Transverse colon (tissue), 4 donors: ENCODE measurements at regions of chr2 and their contacts with region 1.

Region 1: GRCh38 chr2:10043906-10044601 is 704 bp downstream of the KLF11 start:
- DNase-seq: peak; percentile 99
- H3K4me3 ChIP-seq: peak overlapping the region; percentile 56 to 67 (median 58)
- H3K27ac ChIP-seq: peak overlapping the region; percentile 96 to 99 (median 97)
- H3K4me1 ChIP-seq: peaks cover 21 to 60% (median 39%) of the 10 kb centered on the region in 4 donors
- H3K27me3 ChIP-seq: no peaks in the 10 kb centered on the region
- CTCF ChIP-seq: no peak
- EP300 ChIP-seq: peak; percentile 92
- POLR2A ChIP-seq: peak; percentile 22

Region 2: DNA sequence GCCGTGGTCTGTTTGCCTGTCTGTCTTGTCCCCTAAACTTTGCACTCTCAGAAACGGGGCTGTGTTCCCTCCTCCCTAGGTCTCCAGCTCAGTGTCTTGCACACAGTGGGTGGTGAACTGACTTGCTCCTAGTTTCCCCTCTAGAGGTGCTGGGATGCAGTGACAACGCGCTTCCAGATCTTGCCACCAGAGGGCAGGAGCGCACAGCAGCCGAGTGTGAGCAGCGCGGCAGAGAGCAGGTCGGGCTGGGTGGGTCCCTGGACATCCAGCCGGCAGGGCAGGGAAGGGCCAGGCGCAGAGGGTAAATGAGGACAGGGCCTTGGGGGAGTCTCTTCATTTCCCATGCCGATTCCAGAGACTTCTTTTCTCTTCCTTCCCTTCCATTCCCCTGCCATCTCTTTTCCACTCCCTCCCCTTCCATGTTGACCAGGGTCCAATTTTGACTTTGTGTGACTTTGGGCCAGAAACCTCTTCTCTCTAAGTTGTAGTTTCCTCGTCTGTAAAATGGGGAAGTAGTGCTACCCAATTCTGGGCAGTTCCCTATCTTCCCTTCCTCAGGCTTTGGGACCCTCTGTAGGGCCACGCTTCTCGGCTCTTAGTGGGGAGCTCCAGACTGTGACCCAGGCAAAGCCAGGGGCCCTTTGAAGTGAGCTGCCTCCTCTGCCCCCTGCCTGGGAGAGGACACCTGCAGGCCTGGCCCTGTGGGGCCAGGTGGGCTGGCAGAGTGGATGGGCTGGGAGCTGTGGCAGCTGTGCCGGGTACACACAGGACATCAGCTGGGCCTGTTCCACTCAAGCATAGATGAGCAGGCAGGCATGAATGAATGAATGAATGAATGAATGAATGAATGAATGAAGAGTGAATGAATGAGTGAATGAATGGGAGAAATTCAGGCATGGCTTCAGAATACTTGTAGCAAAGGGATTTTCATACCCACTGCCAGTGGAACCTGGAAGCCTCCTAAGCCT is 244.1 kb before region 1 on chr2:
- in situ Hi-C with region 1: loop called in 2 of 4 experiments (anchors 10 kb)
- intact Hi-C with region 1: no loop called
- DNase-seq: peak; percentile 92
- H3K4me3 ChIP-seq: peak overlapping the region in 1 of 4 donors; percentile 13
- H3K27ac ChIP-seq: peak overlapping the region; percentile 40 to 73 (median 60)
- H3K4me1 ChIP-seq: peaks cover 11 to 60% (median 32%) of the 10 kb centered on the region in 4 donors
- H3K27me3 ChIP-seq: no peaks in the 10 kb centered on the region
- CTCF ChIP-seq: peak; percentile 95 to 99 (median 96)
- EP300 ChIP-seq: no peak
- POLR2A ChIP-seq: no peak

Region 3: DNA sequence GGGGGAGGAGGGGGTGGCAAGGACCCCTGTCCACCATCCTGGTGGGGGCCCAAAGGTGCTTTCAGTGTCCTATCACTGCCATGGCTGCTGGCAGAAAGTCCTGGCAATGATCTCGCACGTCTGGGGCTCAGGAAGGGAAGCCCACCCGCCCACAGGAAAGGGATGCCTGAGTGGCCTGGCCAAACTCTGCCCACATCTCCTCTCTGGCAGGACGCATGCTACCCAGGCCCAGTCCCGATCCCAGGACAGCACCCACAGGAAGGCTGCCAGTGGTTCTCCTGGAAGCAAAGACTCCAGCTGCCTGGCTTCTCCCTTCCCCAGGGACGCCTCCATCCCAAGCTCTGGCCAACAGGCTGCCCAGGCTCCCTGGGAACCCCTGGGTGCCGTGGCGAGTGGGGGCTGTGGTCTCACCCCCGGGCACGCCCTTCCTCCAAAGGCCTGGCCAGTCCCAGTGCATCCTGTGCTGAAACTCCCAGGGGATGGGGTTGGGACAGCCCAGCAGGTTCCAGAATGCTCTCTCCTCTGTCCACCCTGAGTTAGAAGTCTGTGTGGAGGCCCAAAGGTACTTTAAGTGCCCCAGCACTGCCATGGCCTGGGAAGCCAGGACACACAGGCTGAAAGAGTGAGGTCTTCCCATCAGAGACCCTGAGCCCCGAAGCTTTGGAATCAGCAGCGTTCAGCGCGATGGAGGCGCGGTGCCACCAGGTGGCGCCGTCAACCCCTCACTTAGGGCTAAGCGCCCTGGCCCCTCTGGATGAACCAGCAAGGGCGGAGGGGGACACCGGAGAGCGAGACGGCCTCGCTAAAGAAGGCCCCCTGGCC is 230.5 kb before region 1 on chr2:
- in situ Hi-C with region 1: loop called in 2 of 4 experiments (anchors 10 kb)
- intact Hi-C with region 1: loop called (anchors 2 kb)
- DNase-seq: peak; percentile 74
- H3K4me3 ChIP-seq: no peak overlapping the region
- H3K27ac ChIP-seq: no peak overlapping the region
- H3K4me1 ChIP-seq: peaks cover 4 to 17% (median 12%) of the 10 kb centered on the region in 4 donors
- H3K27me3 ChIP-seq: no peaks in the 10 kb centered on the region
- CTCF ChIP-seq: peak; percentile 86 to 94 (median 90)
- EP300 ChIP-seq: no peak
- POLR2A ChIP-seq: no peak

Region 4: GRCh38 chr2:9984217-9984739 is 59.8 kb before region 1 on chr2:
- in situ Hi-C with region 1: loop called in 2 of 4 experiments (anchors 5 kb)
- intact Hi-C with region 1: no loop called
- DNase-seq: no peak
- H3K4me3 ChIP-seq: no peak overlapping the region
- H3K27ac ChIP-seq: peak overlapping the region; percentile 47 to 70 (median 56)
- H3K4me1 ChIP-seq: peaks cover 9 to 20% (median 13%) of the 10 kb centered on the region in 4 donors
- H3K27me3 ChIP-seq: no peaks in the 10 kb centered on the region
- CTCF ChIP-seq: peak; percentile 76 to 89 (median 86)
- EP300 ChIP-seq: no peak
- POLR2A ChIP-seq: no peak

Region 5: GRCh38 chr2:10079234-10079869 is 35.3 kb after region 1 on chr2:
- in situ Hi-C with region 1: no loop called
- intact Hi-C with region 1: loop called (anchors 1 kb)
- DNase-seq: no peak
- H3K4me3 ChIP-seq: peak overlapping the region; percentile 24 to 68 (median 50)
- H3K27ac ChIP-seq: peak overlapping the region; percentile 81 to 93 (median 86)
- H3K4me1 ChIP-seq: peaks cover 5 to 25% (median 15%) of the 10 kb centered on the region in 4 donors
- H3K27me3 ChIP-seq: peaks cover 96% of the 10 kb centered on the region
- CTCF ChIP-seq: peak in 1 of 5 experiments; percentile 4
- EP300 ChIP-seq: no peak
- POLR2A ChIP-seq: no peak